HEK293 (cell line): ENCODE measurements at regions of chr11 and their contacts with region 1.

Region 1: GRCh38 chr11:74726547-74727182 is 4.6 kb downstream of the CHRDL2 start:
- H3K4me3 ChIP-seq: no peak overlapping the region
- H3K27ac ChIP-seq: no peak overlapping the region
- H3K4me1 ChIP-seq: no peaks in the 10 kb centered on the region
- CTCF ChIP-seq: peak; percentile 81

Region 2: DNA sequence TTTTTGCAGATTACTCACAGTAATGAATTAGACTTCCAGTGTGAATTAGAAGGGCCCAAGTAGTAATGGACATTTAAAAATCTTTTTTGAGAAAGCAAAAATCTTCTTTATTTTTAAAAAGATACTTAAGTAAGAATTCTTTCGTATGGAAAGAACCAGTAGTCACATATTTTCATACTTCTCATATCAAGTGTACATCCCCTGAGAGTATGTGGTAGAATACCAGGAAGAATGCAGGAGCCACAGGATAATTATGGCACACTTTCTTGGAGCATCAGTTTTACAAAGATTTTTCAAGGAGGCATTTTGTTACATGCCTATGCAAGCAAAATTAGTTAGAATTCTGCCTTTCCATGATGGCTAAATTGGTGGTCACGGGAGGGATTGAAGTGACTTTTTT is 106.1 kb before region 1 on chr11:
- CTCF ChIA-PET with region 1: no interaction called
- POLR2A ChIA-PET with region 1: no interaction called
- H3K4me3 ChIP-seq: no peak overlapping the region
- H3K27ac ChIP-seq: no peak overlapping the region
- H3K4me1 ChIP-seq: 0 out of 2 replicates have a peak, but pooled peaks cover 2% of the 10 kb centered on the region
- CTCF ChIP-seq: no peak

Region 3: GRCh38 chr11:74634537-74634936 is 92.1 kb before region 1 on chr11:
- CTCF ChIA-PET with region 1: interaction called, 17 read pairs
- POLR2A ChIA-PET with region 1: no interaction called
- H3K4me3 ChIP-seq: no peak overlapping the region
- H3K27ac ChIP-seq: no peak overlapping the region
- H3K4me1 ChIP-seq: peaks cover 9% of the 10 kb centered on the region
- CTCF ChIP-seq: no peak

Region 4: GRCh38 chr11:74662487-74663103 is 64.1 kb before region 1 on chr11:
- CTCF ChIA-PET with region 1: no interaction called
- POLR2A ChIA-PET with region 1: no interaction called
- H3K4me3 ChIP-seq: no peak overlapping the region
- H3K27ac ChIP-seq: no peak overlapping the region
- H3K4me1 ChIP-seq: no peaks in the 10 kb centered on the region
- CTCF ChIP-seq: no peak

Region 5: GRCh38 chr11:74680691-74681531 is 45.8 kb before region 1 on chr11:
- CTCF ChIA-PET with region 1: no interaction called
- POLR2A ChIA-PET with region 1: no interaction called
- H3K4me3 ChIP-seq: no peak overlapping the region
- H3K27ac ChIP-seq: no peak overlapping the region
- H3K4me1 ChIP-seq: no peaks in the 10 kb centered on the region
- CTCF ChIP-seq: no peak

Region 6: GRCh38 chr11:74696932-74697687 is 29.6 kb before region 1 on chr11:
- CTCF ChIA-PET with region 1: interaction called, 103 read pairs
- POLR2A ChIA-PET with region 1: no interaction called
- H3K4me3 ChIP-seq: no peak overlapping the region
- H3K27ac ChIP-seq: no peak overlapping the region
- H3K4me1 ChIP-seq: no peaks in the 10 kb centered on the region
- CTCF ChIP-seq: no peak

Region 7: GRCh38 chr11:74710281-74710938 is 16.3 kb before region 1 on chr11:
- CTCF ChIA-PET with region 1: interaction called, 103 read pairs
- POLR2A ChIA-PET with region 1: interaction called, 3 read pairs
- H3K4me3 ChIP-seq: no peak overlapping the region
- H3K27ac ChIP-seq: no peak overlapping the region
- H3K4me1 ChIP-seq: no peaks in the 10 kb centered on the region
- CTCF ChIP-seq: no peak

Region 8: GRCh38 chr11:74739546-74740270 is 13.0 kb after region 1 on chr11:
- CTCF ChIA-PET with region 1: interaction called, 63 read pairs
- POLR2A ChIA-PET with region 1: no interaction called
- H3K4me3 ChIP-seq: no peak overlapping the region
- H3K27ac ChIP-seq: no peak overlapping the region
- H3K4me1 ChIP-seq: no peaks in the 10 kb centered on the region
- CTCF ChIP-seq: peak; percentile 44; the same call in 1 of the 2 replicates